ENCODE measurements at regions of chr12 and their contacts with region 1.

Region 1: GRCh38 chr12:26097046-26097878 is 27.6 kb downstream of the BHLHE41 start:
- DNase-seq: peak; percentile 86
- ATAC-seq: peak; percentile 99
- H3K4me3 ChIP-seq: no peak overlapping the region
- H3K27ac ChIP-seq: peak overlapping the region; percentile 91
- H3K4me1 ChIP-seq: peaks cover 36% of the 10 kb centered on the region
- H3K27me3 ChIP-seq: no peaks in the 10 kb centered on the region
- CTCF ChIP-seq: peak; percentile 100

Region 2: DNA sequence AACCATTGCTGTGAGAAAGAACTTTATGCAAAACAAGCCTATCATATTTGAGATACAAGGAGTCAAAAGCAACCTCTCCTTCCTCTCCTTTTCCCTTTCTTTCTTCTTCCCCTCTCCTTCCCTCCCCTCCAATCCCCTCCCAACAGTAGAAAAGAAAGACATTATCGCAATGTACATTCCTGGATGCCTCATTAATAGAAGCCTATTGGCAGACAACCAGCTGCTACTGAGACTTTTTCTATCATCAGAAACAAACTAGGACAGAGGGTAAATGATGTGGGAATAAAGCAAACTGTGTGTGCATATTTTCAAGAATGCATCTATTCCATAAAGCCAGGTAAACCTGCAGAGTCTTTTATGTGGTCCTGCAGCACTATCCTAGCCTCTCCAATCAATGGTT is 498.5 kb after region 1 on chr12:
- CTCF ChIA-PET with region 1: no interaction called
- POLR2A ChIA-PET with region 1: no interaction called
- in situ Hi-C with region 1: no loop called
- intact Hi-C with region 1: no loop called
- DNase-seq: no peak
- ATAC-seq: no peak
- H3K4me3 ChIP-seq: no peak overlapping the region
- H3K27ac ChIP-seq: no peak overlapping the region
- H3K4me1 ChIP-seq: no peaks in the 10 kb centered on the region
- H3K27me3 ChIP-seq: no peaks in the 10 kb centered on the region
- CTCF ChIP-seq: no peak

Region 3: DNA sequence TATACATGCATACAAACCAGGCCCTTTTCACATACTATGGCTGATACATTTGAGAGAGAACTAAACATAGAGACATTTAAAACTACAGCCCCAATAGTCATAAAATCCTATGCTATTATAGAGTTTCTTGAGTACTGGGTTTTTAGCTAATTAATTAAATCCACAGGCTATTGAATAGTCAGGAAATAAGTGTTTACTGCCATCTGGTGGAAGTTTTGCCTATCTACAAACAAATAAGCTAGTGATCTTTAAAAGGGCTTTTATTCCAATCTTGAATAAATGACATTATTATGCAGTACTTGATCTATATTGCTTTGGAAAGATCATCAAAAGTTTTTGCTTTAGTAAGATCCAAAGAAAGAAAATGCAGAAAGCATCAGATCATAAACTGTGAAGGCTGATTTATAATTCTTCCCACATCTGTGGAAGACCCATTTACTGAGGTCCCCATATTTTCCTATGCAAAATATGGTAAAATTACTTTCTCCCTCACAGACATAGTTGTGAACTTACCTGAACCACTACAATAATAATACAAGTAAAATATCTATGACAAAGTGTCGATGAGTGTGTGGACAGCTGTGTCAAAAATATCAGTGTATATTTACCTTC is 604.4 kb after region 1 on chr12:
- CTCF ChIA-PET with region 1: interaction called, 4 read pairs
- POLR2A ChIA-PET with region 1: no interaction called
- in situ Hi-C with region 1: no loop called
- intact Hi-C with region 1: loop called (anchors 2 kb)
- DNase-seq: no peak
- ATAC-seq: peak; percentile 76
- H3K4me3 ChIP-seq: no peak overlapping the region
- H3K27ac ChIP-seq: no peak overlapping the region
- H3K4me1 ChIP-seq: peaks cover 14% of the 10 kb centered on the region
- H3K27me3 ChIP-seq: no peaks in the 10 kb centered on the region
- CTCF ChIP-seq: peak; percentile 77; the same call in 1 of the 2 replicates

Measured in Panc1 (cell line).